Psoas muscle (tissue), 8 donors: ENCODE measurements at regions of chr10 and their contacts with region 1.

Region 1: DNA sequence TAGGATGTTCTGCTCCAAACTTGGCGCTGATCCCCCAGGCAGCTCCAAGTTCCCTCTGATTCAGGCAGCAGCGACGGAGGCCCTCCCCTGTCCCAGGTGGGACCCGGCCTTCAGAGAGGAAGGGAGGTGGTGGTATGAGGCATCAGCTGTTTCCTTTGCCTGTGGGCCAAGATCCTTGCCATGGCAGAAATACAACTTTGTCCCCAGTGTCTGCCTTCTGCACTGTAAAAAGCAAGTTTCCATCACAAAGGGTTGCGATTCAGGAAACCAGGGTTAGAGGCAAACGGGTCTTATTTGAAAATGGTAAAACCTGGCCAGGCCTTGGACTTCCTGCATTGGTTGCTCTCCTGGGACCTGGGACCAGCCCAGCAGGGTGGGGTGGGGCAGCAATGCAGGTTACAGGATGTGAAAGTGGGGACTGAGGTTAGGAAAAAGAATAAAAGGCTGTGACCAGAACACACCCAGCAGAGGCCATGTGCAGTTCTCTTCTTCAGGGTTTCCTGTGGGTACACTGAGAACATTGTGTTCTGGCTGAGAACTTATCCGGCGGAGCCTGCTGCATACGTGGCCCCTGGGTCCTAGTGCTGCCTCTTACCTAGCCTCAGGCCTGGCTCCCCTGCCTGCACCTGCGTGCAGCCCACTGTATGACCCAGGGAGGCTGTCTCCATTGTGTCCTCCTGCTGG is 25.1 kb upstream of the DDIT4 start:
- DNase-seq: peak; percentile 87 to 93
- ATAC-seq: peak; percentile 85 to 93 (median 91)
- H3K4me3 ChIP-seq: peak overlapping the region; percentile 48
- H3K27ac ChIP-seq: peak overlapping the region; percentile 90
- H3K4me1 ChIP-seq: peaks cover 90% of the 10 kb centered on the region
- H3K27me3 ChIP-seq: no peaks in the 10 kb centered on the region
- CTCF ChIP-seq: no peak

Region 2: DNA sequence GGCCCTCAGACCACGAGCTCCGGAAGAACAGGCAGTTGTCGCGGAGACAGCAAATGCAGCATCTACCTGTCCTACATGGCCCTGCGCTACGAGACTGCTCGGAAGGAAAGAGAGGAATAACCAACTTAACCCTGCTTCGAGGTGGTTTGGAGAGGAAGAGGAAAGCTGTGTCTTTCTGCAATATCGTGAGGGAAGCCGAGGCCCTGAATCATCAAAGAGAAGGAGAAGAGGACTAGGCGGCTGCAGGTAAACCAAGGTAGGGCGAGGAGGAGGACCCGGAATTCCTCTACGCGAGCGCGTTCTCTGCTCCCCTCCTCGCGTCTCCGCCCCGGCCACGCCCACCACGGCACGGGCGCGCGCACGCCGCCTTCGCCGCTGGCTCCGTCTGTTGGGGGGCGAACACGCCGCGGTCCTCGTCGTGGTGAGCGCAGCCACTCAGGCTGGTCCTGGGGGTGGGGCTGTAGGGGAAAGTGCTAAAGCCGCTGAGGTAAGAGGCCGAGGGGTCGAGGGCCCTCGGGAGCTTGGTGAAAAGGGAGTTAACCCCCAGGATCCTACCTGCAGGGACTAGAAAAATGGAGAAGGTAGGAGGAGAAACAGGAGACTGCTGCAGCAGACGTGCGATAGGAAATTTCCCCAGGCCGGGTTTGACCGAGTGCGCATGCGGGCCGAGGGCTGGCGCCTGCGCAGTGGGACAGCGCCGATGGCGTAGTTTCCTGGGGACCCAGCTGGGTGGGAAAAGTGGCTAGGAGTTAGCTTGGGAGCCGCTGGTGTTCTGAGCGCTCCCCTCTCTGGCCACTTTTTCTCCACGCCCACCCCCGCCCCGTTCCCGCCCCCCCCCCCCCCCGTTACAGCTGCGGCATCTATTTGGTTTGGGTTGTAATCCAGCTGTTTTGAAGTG is 32.7 kb before region 1 on chr10 and contains the starts of genes ANAPC16 and ASCC1:
- intact Hi-C with region 1: no loop called
- DNase-seq: peak; percentile 92 to 96
- ATAC-seq: peak; percentile 96 to 98 (median 98)
- H3K4me3 ChIP-seq: peak within 1 kb of the TSS; percentile 78
- H3K27ac ChIP-seq: peak within 1 kb of the TSS; percentile 97
- H3K4me1 ChIP-seq: peaks cover 50% of the 10 kb centered on the region
- H3K27me3 ChIP-seq: no peaks in the 10 kb centered on the region
- CTCF ChIP-seq: no peak
- total RNA-seq, gene ANAPC16: 80.3 to 144 (median 119) TPM
- total RNA-seq, gene ASCC1: 15.3 to 22.4 (median 19.4) TPM

Region 3: DNA sequence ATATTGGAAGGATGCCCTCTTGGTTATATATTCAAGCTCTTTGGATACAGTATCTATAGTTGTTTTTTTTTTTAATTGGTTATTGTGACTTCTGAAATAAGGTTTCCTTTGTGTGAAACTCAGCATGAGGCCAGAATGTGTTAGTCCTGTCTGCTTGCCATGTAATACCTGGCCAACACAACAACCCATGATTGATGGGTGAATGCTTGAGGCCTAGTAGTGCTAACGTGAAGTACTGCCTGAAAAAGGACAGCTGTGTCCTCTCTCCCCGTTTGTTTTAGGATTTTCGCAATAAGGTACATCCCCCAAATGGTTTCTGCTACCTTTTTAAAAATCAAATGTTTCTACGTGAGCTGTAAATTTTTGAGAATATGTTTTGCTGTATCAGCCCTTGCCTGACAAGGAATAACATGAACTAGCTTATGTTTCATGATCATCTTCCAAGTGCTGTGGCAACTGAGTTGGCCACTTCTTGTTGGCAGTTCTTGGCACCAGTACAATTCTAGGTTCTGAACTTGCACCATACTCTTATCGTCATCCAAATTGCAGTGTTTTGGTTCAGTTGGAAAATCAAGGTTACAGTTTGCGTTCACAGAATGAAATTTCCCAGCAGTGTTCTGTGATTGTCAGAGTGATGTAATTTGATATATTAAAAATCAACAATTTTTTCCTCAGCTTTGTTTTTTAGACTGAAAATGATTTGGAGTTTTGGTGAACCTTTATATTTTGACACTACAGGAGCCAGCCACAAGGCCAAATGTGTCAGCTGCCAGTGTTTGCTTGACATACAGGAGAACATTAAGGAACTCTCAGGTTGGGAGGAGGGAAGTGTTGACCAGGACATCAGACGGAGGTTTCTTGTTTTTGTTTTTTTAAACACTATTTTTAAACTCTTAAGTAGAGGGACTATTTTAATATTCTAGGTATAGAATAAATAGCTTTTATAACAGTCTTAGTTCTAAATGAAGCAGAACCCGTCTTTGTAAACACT is 19.1 kb before region 1 on chr10:
- intact Hi-C with region 1: loop called in 1 of 2 experiments (anchors 1 kb)
- DNase-seq: no peak
- ATAC-seq: peak; percentile 78 to 83 (median 80)
- H3K4me3 ChIP-seq: no peak overlapping the region
- H3K27ac ChIP-seq: peak overlapping the region; percentile 91
- H3K4me1 ChIP-seq: peaks cover 43% of the 10 kb centered on the region
- H3K27me3 ChIP-seq: no peaks in the 10 kb centered on the region
- CTCF ChIP-seq: no peak